Activated naive CD4-positive, alpha-beta T cell treated with anti-CD3 and anti-CD28 coated beads for 36 hours (primary cell): ENCODE measurements at regions of chr7 and their contacts with region 1.

Region 1: DNA sequence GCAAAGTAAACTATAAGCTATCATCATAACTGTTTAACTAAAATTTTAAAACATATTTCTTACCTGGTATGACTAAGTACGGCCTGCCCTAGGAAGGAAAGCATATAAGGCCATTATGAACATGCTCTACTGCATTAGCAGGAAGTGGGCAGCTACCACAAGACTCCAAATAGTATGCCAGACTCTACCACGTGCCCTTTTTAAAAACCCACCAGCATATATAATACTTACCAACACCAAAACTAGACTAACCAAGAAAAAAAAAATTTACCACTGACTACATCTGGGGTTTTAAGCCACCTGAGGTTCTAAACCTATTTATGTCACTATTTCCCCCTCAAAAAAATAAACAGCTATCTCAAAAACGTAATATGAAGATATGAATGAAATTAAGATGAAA is 30.1 kb downstream of the NUDCD3 start:
- DNase-seq: peak; percentile 74
- H3K4me3 Mint-ChIP-seq: no peak overlapping the region
- H3K27ac Mint-ChIP-seq: peak overlapping the region; percentile 94
- H3K4me1 Mint-ChIP-seq: peaks cover 72% of the 10 kb centered on the region
- H3K27me3 Mint-ChIP-seq: no peaks in the 10 kb centered on the region

Region 2: DNA sequence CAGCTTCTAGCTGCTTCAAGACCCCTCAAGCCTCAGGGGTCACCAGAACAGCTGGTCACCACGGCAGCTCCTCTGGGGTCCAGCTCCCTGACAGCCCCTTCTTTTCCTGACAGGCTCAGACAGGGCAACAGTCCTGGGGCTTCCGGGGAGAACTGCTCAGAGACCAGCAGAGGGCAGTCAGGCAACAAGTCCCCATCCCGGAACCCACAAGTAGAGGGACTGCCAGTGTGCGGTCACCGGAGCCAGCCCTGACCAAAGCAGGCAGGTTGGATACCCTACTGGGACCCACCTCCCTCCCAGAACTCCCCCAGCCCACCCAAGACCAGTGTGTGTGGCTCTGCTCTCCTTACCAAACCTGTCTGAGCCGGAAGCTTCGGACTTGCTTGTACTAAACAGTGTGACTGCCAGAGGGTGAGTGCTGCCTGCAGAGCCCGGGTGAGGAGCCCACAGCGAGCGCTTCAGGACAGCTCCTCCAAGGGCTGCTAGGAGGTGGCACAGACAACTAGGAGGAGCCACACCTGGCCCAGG is 219.3 kb before region 1 on chr7:
- CTCF ChIA-PET with region 1: interaction called, 3 read pairs
- intact Hi-C with region 1: loop called (anchors 5 kb)
- DNase-seq: peak; percentile 82
- H3K4me3 Mint-ChIP-seq: no peak overlapping the region
- H3K27ac Mint-ChIP-seq: peak overlapping the region; percentile 30
- H3K4me1 Mint-ChIP-seq: no peaks in the 10 kb centered on the region
- H3K27me3 Mint-ChIP-seq: no peaks in the 10 kb centered on the region

Region 3: GRCh38 chr7:44275957-44276410 is 184.3 kb before region 1 on chr7:
- CTCF ChIA-PET with region 1: no interaction called
- intact Hi-C with region 1: no loop called
- DNase-seq: no peak
- H3K4me3 Mint-ChIP-seq: no peak overlapping the region
- H3K27ac Mint-ChIP-seq: no peak overlapping the region
- H3K4me1 Mint-ChIP-seq: no peaks in the 10 kb centered on the region
- H3K27me3 Mint-ChIP-seq: no peaks in the 10 kb centered on the region

Region 4: DNA sequence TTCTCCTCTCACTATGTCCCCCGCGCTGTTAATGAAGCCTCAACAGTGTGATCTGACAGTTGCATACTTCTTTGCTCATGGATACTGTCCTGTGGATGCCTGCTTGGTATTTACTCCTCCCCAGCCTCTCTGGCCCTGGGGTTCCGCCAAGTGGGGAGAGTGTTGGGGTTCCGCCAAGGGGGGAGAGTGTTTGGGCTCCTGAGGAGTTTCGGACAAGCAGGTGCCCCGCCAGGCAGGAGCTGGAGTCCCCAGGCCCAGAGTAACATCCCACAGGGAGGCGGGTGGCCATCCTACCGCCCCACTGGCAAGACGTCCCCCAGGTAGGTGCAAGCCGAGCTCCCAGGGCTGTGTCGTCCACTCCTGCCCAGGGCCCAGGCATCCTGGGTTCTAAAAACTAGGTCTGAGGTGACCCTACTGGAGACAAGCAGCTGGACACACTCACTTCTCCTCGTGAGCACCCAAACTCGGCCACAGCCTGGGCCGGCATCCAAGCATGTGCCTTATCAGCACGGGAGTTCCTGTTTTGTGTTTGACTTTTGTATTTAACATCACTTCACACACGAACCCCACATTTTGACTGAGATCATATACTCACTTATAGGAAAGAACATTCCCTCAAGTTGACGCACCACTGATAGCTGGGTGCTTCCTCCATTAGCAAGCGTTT is 169.1 kb before region 1 on chr7:
- CTCF ChIA-PET with region 1: no interaction called
- intact Hi-C with region 1: no loop called
- DNase-seq: peak; percentile 1
- H3K4me3 Mint-ChIP-seq: no peak overlapping the region
- H3K27ac Mint-ChIP-seq: no peak overlapping the region
- H3K4me1 Mint-ChIP-seq: no peaks in the 10 kb centered on the region
- H3K27me3 Mint-ChIP-seq: peaks cover 3% of the 10 kb centered on the region

Region 5: GRCh38 chr7:44415047-44415446 is 45.3 kb before region 1 on chr7:
- CTCF ChIA-PET with region 1: interaction called, 3 read pairs
- intact Hi-C with region 1: loop called (anchors 1 kb)
- DNase-seq: no peak
- H3K4me3 Mint-ChIP-seq: no peak overlapping the region
- H3K27ac Mint-ChIP-seq: peak overlapping the region; percentile 47
- H3K4me1 Mint-ChIP-seq: peaks cover 19% of the 10 kb centered on the region
- H3K27me3 Mint-ChIP-seq: no peaks in the 10 kb centered on the region

Region 6: GRCh38 chr7:44477063-44477830 is 16.9 kb after region 1 on chr7:
- CTCF ChIA-PET with region 1: interaction called, 5 read pairs
- intact Hi-C with region 1: loop called (anchors 2 kb)
- DNase-seq: peak; percentile 70
- H3K4me3 Mint-ChIP-seq: no peak overlapping the region
- H3K27ac Mint-ChIP-seq: no peak overlapping the region
- H3K4me1 Mint-ChIP-seq: peaks cover 33% of the 10 kb centered on the region
- H3K27me3 Mint-ChIP-seq: no peaks in the 10 kb centered on the region

Region 7: GRCh38 chr7:44735403-44736165 is 275.3 kb after region 1 on chr7:
- CTCF ChIA-PET with region 1: no interaction called
- intact Hi-C with region 1: loop called (anchors 5 kb)
- DNase-seq: peak; percentile 83
- H3K4me3 Mint-ChIP-seq: no peak overlapping the region
- H3K27ac Mint-ChIP-seq: peak overlapping the region; percentile 79
- H3K4me1 Mint-ChIP-seq: peaks cover 31% of the 10 kb centered on the region
- H3K27me3 Mint-ChIP-seq: no peaks in the 10 kb centered on the region